ENCODE measurements at regions of chr2 and their contacts with region 1.

Region 1: DNA sequence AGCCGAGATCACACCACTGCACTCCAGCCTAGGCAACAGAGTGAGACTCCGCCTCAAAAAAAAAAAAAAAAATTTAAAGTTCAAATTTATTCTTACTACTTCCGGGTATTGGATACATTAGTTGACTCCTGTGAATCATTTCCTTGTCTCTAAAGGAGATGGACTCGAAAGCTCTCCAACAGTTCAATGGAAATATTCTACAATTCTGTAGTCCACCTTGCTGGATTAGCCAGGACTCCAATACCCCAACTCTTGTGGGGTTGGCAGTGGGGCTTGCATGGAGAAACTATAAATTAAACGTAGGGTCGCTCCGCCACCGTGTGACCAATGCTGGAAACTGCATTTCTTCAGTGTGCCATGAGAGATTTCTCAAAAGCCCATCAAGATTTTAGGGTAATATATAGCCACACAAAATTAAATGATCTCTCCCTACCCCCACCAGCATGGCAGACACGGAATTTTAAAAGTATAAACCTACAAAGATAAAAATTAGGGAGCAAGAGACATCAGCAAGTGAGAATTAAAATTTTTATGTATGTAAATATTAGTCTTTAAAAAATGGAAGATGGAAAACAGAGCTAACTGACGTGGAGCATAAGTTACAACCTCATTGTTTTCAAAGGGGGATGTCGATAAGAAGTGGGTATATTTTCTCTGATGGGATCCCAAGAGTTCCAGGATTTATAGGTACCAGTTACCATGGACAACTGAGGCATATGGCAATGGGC is 27.8 kb upstream of the GAREM2 start:
- DNase-seq: peak; percentile 51 to 60
- H3K4me3 ChIP-seq: no peak overlapping the region
- H3K27ac ChIP-seq: no peak overlapping the region
- H3K4me1 ChIP-seq: peaks cover 23% of the 10 kb centered on the region
- H3K27me3 ChIP-seq: no peaks in the 10 kb centered on the region
- CTCF ChIP-seq: peak; percentile 88

Region 2: DNA sequence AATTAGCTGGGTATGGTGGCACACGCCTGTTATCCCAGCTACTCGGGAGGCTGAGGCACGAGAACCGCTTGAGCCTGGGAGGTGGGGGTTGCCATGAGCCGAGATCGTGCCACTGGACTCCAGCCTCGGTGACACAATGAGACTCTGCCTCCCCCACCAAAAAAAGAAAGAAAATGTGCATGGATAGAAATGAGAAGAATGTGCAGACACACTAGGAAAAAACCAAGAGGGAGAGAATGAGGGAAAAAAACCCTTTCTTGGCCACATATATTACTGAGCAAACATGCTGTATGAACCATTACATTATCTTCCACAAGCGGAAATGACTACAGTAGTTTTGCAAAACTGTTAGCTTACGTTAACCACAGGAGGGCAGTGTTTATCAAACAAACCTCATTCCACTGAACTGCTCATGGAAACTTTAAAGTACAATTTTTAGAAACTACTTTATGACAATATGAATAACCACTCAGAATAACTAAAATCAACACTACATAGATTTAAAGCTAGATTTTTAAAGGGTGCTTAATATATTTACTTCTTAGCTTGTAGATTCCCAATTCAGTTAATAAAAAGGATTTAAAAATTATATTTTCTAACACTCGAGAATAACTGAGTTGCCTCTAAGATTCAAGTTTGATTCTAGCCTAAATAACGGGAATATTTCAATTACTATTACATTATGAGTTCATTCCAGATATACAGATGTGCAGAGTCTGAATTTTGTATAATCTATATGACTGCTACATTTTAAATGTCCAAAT is 293.2 kb before region 1 on chr2:
- CTCF ChIA-PET with region 1: no interaction called
- POLR2A ChIA-PET with region 1: no interaction called
- intact Hi-C with region 1: loop called (anchors 1 kb)
- DNase-seq: peak; percentile 22 to 75
- H3K4me3 ChIP-seq: no peak overlapping the region
- H3K27ac ChIP-seq: peak overlapping the region; percentile 5; the same call in 1 of the 2 replicates
- H3K4me1 ChIP-seq: peaks cover 11% of the 10 kb centered on the region
- H3K27me3 ChIP-seq: no peaks in the 10 kb centered on the region
- CTCF ChIP-seq: peak; percentile 85

Region 3: DNA sequence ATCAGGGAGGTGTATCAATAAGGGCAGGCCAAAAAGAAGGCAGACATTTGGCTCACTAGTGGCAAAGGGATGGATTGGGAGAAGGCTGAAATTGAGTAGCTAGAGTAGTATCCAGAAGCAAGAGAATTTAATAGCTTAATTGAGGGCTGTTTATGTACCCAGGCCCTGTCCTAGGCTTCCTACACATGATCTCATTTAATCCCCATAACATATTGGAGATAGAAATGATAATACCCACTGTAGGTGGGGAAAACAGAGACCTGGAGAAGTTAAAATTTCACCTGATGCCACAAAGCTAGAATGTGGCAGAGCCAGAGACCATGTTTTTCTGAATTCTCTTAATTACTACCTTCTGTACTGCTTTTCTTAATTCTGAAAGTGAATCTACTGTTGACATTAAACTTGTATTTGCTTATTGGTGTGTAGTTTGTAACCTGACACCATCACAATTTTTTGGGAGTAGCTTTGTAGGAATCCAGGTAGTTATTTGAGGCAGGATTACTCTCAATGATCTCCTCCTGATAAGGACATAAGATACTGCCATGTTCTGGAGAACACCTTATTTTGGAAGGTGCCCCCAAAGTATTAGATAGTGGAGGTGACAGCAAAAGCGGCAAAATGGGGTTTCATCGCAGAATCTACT is 69.0 kb before region 1 on chr2:
- CTCF ChIA-PET with region 1: no interaction called
- POLR2A ChIA-PET with region 1: interaction called, 29 read pairs
- intact Hi-C with region 1: no loop called
- DNase-seq: peak in 1 of 2 experiments; percentile 71
- H3K4me3 ChIP-seq: no peak overlapping the region
- H3K27ac ChIP-seq: peak overlapping the region; percentile 35
- H3K4me1 ChIP-seq: peaks cover 22% of the 10 kb centered on the region
- H3K27me3 ChIP-seq: no peaks in the 10 kb centered on the region
- CTCF ChIP-seq: no peak

Region 4: DNA sequence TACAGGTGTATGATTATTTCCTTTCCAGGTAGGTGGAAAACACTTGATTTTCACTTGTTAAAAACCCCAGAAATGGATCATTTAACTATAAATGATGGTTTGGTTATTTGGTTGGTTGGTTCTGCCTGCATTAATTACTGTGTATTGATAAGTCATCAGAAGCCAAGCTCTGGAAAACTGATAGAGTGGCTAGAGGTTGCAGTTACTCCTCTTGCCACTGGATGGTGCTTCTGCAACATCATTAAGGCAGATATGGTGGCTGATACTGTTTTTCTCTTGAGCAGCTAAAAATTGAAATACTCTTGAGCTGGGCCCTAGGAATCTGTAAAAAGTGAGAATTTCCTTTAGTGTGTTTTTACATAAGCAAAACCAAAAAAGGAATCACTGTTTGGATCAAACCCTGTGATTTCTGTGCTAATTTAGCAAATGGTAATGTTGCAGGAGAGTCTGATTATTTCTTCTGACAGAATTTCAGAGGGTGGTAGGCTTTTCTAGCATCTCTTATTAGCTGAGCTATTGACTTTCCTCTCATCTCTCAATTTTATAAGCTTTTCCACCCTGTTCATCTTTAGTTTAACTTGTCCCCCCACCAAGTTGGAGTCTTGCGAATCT is 57.0 kb before region 1 on chr2:
- CTCF ChIA-PET with region 1: no interaction called
- POLR2A ChIA-PET with region 1: no interaction called
- intact Hi-C with region 1: loop called (anchors 2 kb)
- DNase-seq: no peak
- H3K4me3 ChIP-seq: no peak overlapping the region
- H3K27ac ChIP-seq: no peak overlapping the region
- H3K4me1 ChIP-seq: no peaks in the 10 kb centered on the region
- H3K27me3 ChIP-seq: no peaks in the 10 kb centered on the region
- CTCF ChIP-seq: peak; percentile 78

Region 5: DNA sequence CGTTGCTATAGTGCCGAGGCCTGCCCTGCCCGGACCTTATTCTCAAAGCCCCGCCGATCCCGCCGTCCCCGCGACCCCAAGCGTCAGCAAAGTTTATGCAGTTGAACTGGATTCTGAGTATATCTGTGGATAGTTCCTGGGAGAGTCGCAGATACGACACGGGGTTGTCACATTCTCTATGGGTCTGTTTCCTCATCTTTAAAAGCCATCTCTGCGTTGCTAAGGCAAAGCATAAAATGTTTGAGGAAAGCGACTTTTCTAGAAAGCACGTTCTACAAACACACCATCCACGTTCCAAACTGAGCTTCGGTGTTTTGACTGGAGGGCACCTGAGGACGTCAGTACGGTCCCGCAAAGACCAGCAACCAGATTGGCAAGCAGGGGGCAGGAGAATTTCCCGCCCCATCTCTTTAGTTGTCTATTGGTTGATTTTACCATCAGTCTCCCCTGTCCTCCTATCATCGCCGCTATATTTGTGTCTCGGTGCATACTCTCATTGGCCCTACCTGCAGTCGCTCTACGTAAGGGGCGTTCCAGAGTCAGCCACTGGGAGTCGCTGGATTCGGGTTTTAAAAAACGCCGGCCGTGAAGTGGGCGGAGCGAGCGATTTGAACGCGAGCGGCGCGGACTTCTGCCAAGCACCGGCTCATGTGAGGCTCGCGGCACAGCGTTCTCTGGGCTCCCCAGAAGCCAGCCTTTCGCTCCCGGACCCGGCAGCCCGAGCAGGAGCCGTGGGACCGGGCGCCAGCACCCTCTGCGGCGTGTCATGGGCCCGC is 640.5 kb after region 1 on chr2 and contains the start of gene CENPA:
- CTCF ChIA-PET with region 1: no interaction called
- POLR2A ChIA-PET with region 1: no interaction called
- intact Hi-C with region 1: no loop called
- DNase-seq: peak; percentile 94 to 99
- H3K4me3 ChIP-seq: peak within 1 kb of the TSS; percentile 82
- H3K27ac ChIP-seq: peak within 1 kb of the TSS; percentile 31; the same call in 1 of the 2 replicates
- H3K4me1 ChIP-seq: peaks cover 25% of the 10 kb centered on the region
- H3K27me3 ChIP-seq: no peaks in the 10 kb centered on the region
- CTCF ChIP-seq: peak; percentile 70
- total RNA-seq, gene CENPA: 43.6 and 48.8 TPM in 2 replicates

Measured in PC-9 (cell line).